Aorta (tissue), 5 donors: ENCODE measurements at regions of chr7 and their contacts with region 1.

Region 1: GRCh38 chr7:56074371-56074791 is 10.3 kb downstream of the SUMF2 start:
- DNase-seq: peak; percentile 86 to 94
- ATAC-seq: peak; percentile 92
- H3K4me3 ChIP-seq: no peak overlapping the region
- H3K27ac ChIP-seq: no peak overlapping the region
- H3K4me1 ChIP-seq: no peaks in the 10 kb centered on the region
- H3K27me3 ChIP-seq: no peaks in the 10 kb centered on the region

Region 2: DNA sequence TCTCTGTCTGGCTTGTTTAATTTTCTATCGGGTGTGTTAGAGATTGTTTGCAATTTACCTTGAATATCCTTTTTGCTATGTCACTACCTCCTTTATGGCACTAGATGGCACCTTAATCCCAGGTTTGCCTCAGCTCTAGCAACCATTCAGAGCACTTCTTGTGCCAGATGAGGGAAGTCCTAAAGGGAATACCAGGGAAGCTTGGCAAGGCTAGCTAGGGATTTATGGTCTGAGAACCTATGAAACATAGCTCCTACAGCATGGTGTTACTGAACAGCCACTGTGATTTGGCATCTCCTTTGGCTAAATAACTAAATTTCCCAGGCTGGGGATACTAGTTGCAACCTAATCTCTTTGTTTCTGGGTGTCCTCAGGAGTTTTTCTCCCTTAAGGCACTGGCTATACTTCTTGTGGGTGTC is 433.1 kb before region 1 on chr7:
- intact Hi-C with region 1: loop called (anchors 10 kb)
- DNase-seq: no peak
- ATAC-seq: peak; percentile 85
- H3K4me3 ChIP-seq: no peak overlapping the region
- H3K27ac ChIP-seq: no peak overlapping the region
- H3K4me1 ChIP-seq: no peaks in the 10 kb centered on the region
- H3K27me3 ChIP-seq: no peaks in the 10 kb centered on the region

Region 3: GRCh38 chr7:56003749-56004148 is 70.6 kb before region 1 on chr7:
- intact Hi-C with region 1: loop called (anchors 2 to 5 kb)
- DNase-seq: no peak
- ATAC-seq: no peak
- H3K4me3 ChIP-seq: no peak overlapping the region
- H3K27ac ChIP-seq: no peak overlapping the region
- H3K4me1 ChIP-seq: no peaks in the 10 kb centered on the region
- H3K27me3 ChIP-seq: no peaks in the 10 kb centered on the region

Region 4: GRCh38 chr7:56106108-56107073 is 32.0 kb after region 1 on chr7 and contains the start of gene CHCHD2:
- intact Hi-C with region 1: no loop called
- DNase-seq: peak; percentile 97 to 99
- ATAC-seq: peak; percentile 100
- H3K4me3 ChIP-seq: peak within 1 kb of the TSS; percentile 98
- H3K27ac ChIP-seq: peak within 1 kb of the TSS; percentile 77 to 87
- H3K4me1 ChIP-seq: no peaks in the 10 kb centered on the region
- H3K27me3 ChIP-seq: no peaks in the 10 kb centered on the region
- total RNA-seq, gene CHCHD2: 187 to 240 TPM

Region 5: DNA sequence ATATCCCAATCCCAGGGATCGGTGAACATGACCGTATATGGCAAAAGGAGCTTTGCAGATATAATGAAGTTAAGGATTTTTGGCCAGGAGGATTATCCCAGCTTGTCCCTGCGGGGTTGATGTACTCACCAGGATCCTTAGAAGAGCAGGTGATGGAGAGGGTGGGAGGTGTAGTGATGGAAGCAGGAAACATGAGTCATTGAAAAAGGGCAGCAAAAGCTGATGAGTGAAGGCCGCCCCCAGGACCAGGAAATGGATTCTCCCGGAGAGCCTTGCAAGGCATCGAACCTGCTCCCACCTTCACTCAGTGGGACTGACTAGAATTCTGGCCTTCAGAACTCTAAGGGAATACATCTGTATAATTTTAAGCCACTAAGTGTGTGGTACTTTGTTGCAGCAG is 47.1 kb after region 1 on chr7:
- intact Hi-C with region 1: no loop called
- DNase-seq: no peak
- ATAC-seq: no peak
- H3K4me3 ChIP-seq: no peak overlapping the region
- H3K27ac ChIP-seq: no peak overlapping the region
- H3K4me1 ChIP-seq: no peaks in the 10 kb centered on the region
- H3K27me3 ChIP-seq: no peaks in the 10 kb centered on the region